Right cardiac atrium (tissue), 5 donors: ENCODE measurements at regions of chr18 and their contacts with region 1.

Region 1: DNA sequence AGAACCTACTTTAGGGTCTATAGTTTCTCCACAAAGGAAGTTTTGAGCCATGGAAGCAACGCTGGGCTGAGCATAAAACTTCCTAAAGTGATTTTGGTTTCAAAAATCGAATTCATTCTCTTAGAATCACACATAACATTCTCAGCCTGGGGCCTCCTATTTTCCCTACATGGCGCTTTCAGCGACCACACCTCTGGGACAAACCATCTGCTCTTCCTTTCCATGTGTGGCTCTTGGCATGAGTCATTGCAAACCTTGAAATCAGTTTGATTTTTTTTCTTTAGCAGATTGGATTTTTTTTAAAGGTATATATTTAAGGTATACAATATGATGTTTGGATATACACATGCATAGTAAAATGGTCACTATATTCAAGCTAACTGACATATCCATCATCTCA is 72.5 kb upstream of the APCDD1 start:
- DNase-seq: no peak
- ATAC-seq: no peak
- H3K4me3 ChIP-seq: no peak overlapping the region
- H3K27ac ChIP-seq: no peak overlapping the region
- H3K4me1 ChIP-seq: no peaks in the 10 kb centered on the region
- H3K27me3 ChIP-seq: no peaks in the 10 kb centered on the region

Region 2: GRCh38 chr18:9971313-9971920 is 410.5 kb before region 1 on chr18:
- intact Hi-C with region 1: no loop called
- DNase-seq: peak; percentile 57 to 79 (median 67)
- ATAC-seq: peak; percentile 54 to 57
- H3K4me3 ChIP-seq: no peak overlapping the region
- H3K27ac ChIP-seq: no peak overlapping the region
- H3K4me1 ChIP-seq: no peaks in the 10 kb centered on the region
- H3K27me3 ChIP-seq: no peaks in the 10 kb centered on the region

Region 3: DNA sequence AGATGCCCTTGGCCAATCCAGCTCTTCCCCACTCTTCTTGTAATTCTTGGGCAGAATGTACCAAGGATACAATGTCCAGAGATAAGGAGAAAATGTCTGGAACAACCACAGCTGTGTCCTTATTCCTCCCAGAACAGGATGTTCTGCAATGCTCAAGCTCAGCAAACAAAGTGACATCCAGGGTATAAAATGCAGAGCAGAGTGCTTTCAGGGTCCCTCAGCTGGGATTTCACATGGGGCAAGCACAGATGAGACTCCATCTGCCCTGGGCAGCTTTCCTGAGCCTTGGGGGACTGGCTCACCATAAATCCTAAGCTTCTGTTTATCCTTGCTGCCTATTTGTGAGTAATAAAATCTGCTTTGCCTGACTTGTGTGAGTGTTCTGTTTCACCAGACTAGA is 340.8 kb before region 1 on chr18:
- intact Hi-C with region 1: loop called in 1 of 4 experiments (anchors 10 kb)
- DNase-seq: peak; percentile 71 to 91 (median 80)
- ATAC-seq: peak; percentile 92 to 93
- H3K4me3 ChIP-seq: no peak overlapping the region
- H3K27ac ChIP-seq: no peak overlapping the region
- H3K4me1 ChIP-seq: peaks cover 2% of the 10 kb centered on the region
- H3K27me3 ChIP-seq: no peaks in the 10 kb centered on the region

Region 4: GRCh38 chr18:10312326-10313015 is 69.5 kb before region 1 on chr18:
- intact Hi-C with region 1: no loop called
- DNase-seq: no peak
- ATAC-seq: no peak
- H3K4me3 ChIP-seq: no peak overlapping the region
- H3K27ac ChIP-seq: no peak overlapping the region
- H3K4me1 ChIP-seq: no peaks in the 10 kb centered on the region
- H3K27me3 ChIP-seq: no peaks in the 10 kb centered on the region